Sigmoid colon (tissue), 7 donors: ENCODE measurements at regions of chr19 and their contacts with region 1.

Region 1: GRCh38 chr19:29760752-29761502 is 45.9 kb upstream of the C19orf12 start:
- DNase-seq: no peak
- H3K4me3 ChIP-seq: peak overlapping the region in 1 of 4 donors; percentile 16
- H3K27ac ChIP-seq: no peak overlapping the region
- H3K4me1 ChIP-seq: no peaks in the 10 kb centered on the region
- H3K27me3 ChIP-seq: peaks cover 0 to 7% (median 0%) of the 10 kb centered on the region in 3 donors
- CTCF ChIP-seq: no peak
- EP300 ChIP-seq: no peak
- POLR2A ChIP-seq: no peak

Region 2: GRCh38 chr19:29630665-29631064 is 130.3 kb before region 1 on chr19:
- intact Hi-C with region 1: no loop called
- DNase-seq: peak; percentile 9
- H3K4me3 ChIP-seq: no peak overlapping the region
- H3K27ac ChIP-seq: no peak overlapping the region
- H3K4me1 ChIP-seq: no peaks in the 10 kb centered on the region
- H3K27me3 ChIP-seq: no peaks in the 10 kb centered on the region
- CTCF ChIP-seq: no peak
- EP300 ChIP-seq: no peak
- POLR2A ChIP-seq: no peak

Region 3: GRCh38 chr19:29724102-29724641 is 36.8 kb before region 1 on chr19:
- intact Hi-C with region 1: no loop called
- DNase-seq: no peak
- H3K4me3 ChIP-seq: peak overlapping the region in 3 of 4 donors; percentile 19 to 41 (median 35)
- H3K27ac ChIP-seq: no peak overlapping the region
- H3K4me1 ChIP-seq: peaks cover 0 to 13% (median 11%) of the 10 kb centered on the region in 4 donors
- H3K27me3 ChIP-seq: peaks cover 0 to 57% (median 14%) of the 10 kb centered on the region in 3 donors
- CTCF ChIP-seq: no peak
- EP300 ChIP-seq: no peak
- POLR2A ChIP-seq: no peak

Region 4: DNA sequence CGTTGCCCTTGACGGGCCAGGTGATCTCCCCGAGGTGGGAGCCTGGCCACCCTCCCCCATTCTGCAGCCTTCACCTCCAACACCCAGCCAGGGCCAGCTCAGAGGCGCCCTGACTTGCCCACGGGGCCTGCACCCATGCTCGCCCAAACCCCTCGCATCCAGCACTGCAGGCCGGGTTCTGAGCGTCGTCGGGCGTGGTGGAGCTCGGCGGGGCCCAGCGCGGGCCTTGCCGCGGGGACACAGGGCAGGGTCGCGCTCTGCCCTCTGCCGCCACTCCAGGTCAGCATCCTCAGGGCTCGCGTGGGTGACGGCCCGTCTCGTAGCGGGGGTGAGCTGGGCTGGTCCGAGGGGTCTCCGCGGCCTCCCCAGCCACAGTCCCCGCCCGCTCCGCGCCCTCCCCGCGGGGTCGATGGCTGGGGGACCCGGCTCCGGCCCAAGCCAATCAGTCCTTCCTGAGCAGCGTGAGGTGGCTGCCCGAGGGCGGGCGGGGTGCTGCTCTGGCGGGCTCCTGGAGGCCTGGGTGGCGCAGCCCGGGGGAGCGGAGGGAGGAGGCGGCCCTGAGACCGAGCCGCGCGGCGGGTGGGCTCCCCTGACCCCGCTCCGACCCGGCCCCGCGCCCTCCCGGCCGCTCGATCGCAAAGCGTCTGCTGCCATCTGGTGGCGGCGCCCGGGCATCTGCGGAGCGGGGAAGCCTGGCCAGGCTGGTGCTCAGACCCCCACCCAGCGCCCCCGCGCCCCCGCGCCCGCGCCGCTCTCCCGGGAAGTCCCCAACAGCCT is 112.3 kb after region 1 on chr19:
- intact Hi-C with region 1: loop called (anchors 1 kb)
- DNase-seq: no peak
- H3K4me3 ChIP-seq: peak overlapping the region; percentile 16 to 62 (median 45)
- H3K27ac ChIP-seq: no peak overlapping the region
- H3K4me1 ChIP-seq: peaks cover 0 to 36% (median 23%) of the 10 kb centered on the region in 4 donors
- H3K27me3 ChIP-seq: peaks cover 10 to 43% (median 18%) of the 10 kb centered on the region in 3 donors
- CTCF ChIP-seq: peak; percentile 14 to 94 (median 50)
- EP300 ChIP-seq: no peak
- POLR2A ChIP-seq: no peak